Ascending aorta (tissue), 2 donors: ENCODE measurements at regions of chr2 and their contacts with region 1.

Region 1: DNA sequence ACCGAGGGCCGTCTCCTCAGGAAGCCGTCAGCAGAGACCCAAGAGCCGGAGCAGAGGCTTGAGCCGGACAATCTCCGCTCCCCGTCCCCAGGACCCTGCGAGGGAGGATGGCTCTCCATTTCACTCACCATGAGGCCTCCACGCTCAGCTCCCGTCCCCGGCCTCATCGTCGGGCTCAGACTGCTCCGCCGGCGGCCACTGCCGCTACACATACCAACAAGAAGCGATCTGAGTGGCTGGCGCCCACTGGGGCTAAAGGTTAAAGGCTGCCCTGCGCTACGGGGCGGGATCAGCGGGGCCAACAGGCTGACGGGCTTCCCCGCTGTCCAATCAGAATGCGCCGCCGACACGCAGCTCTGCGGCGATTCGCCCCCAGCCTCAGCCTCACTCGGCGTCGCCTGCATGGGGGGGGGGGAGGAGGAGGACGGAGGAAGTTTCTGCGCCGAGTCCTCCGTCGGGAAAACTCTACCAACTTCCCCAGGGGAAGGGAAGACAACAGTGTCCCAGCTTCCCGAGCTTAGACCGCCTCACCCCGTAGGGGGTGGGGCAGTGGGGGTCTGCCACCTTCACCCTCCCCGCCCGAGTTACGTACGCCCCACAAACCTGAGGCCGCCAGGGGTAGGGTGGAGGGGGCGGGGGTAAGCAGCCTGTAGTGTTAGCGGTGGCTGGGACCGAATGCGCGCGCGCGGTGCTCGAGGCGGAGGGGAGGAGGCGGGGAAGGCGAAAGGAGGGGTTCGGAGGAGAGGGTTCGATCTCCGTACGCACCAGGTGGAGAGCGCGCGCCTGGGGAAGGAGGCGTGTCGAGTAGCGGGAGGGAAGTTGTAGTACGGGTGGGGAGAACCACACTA is at the start of gene PRPF40A:
- DNase-seq: peak; percentile 95 to 99
- H3K4me3 ChIP-seq: peak within 1 kb of the TSS; percentile 83 to 96
- H3K27ac ChIP-seq: peak within 1 kb of the TSS; percentile 93 to 98
- H3K4me1 ChIP-seq: peaks cover 0 to 32% of the 10 kb centered on the region in 2 donors
- H3K27me3 ChIP-seq: no peaks in the 10 kb centered on the region
- CTCF ChIP-seq: no peak
- total RNA-seq, gene PRPF40A: 28.9 TPM

Region 2: GRCh38 chr2:152175458-152176325 is 541.8 kb before region 1 on chr2 and contains the start of gene STAM2:
- intact Hi-C with region 1: loop called (anchors 1 kb)
- DNase-seq: peak; percentile 64 to 96
- H3K4me3 ChIP-seq: peak within 1 kb of the TSS; percentile 75 to 99
- H3K27ac ChIP-seq: peak within 1 kb of the TSS; percentile 92 to 99
- H3K4me1 ChIP-seq: peaks cover 3 to 15% of the 10 kb centered on the region in 2 donors
- H3K27me3 ChIP-seq: no peaks in the 10 kb centered on the region
- CTCF ChIP-seq: peak; percentile 93 to 98 (median 94)
- total RNA-seq, gene STAM2: 4.0 TPM

Region 3: DNA sequence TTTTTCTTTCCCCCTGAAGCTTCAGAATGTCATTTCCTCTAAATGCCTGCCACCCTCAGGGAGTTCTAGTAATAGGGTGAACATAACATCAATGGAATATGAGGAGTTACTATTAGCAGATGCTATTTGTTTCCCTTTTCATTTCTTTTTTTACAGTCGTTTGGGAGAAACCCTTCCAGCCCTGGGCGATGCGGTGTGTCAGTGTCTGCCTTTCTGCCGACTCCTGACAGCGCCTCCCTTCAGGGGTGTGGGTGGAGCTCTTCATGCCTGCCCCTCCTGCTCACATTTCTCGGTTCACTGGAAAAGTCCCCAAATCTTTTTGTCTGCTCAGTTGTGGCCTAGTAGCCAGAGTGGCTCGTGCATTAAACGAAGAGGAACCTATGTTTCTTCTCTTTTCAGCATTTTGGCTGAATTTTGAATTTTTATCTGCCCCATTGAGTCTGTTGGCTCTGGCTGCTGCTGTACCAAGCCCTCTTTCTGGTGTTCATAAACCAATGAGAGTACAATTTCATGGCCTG is 310.2 kb before region 1 on chr2:
- intact Hi-C with region 1: loop called (anchors 5 kb)
- DNase-seq: peak in 1 of 2 donors; percentile 76
- H3K4me3 ChIP-seq: peak overlapping the region; percentile 29 to 40
- H3K27ac ChIP-seq: peak overlapping the region; percentile 59 to 85
- H3K4me1 ChIP-seq: peaks cover 27 to 67% of the 10 kb centered on the region in 2 donors
- H3K27me3 ChIP-seq: no peaks in the 10 kb centered on the region
- CTCF ChIP-seq: no peak

Region 4: GRCh38 chr2:152648336-152648735 is 69.1 kb before region 1 on chr2:
- intact Hi-C with region 1: no loop called
- DNase-seq: no peak
- H3K4me3 ChIP-seq: no peak overlapping the region
- H3K27ac ChIP-seq: no peak overlapping the region
- H3K4me1 ChIP-seq: peaks cover 0 to 3% of the 10 kb centered on the region in 2 donors
- H3K27me3 ChIP-seq: no peaks in the 10 kb centered on the region
- CTCF ChIP-seq: peak in 1 of 3 experiments; percentile 18

Region 5: DNA sequence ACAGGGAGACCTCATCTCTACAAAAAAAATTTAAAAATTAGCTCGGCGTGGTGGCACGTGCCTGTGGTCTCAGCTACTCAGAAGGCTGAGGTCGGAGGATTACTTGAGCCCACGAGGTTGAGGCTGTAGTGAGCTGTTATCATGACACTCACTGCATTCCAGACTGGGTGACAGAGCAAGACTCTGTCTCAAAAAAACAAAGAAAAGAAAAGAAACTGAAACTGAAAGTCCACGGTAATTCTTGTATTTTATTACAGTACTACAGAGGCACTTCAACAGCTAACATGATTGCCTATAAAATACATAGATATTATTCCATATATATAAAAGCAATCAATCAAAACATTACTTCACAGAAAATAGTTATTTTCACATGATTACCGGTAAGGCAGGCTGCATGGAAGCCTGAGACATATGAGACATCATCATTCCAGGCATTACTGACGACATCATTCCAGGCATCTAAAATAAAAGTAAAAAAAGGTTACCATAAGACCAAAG is 23.2 kb before region 1 on chr2:
- intact Hi-C with region 1: loop called (anchors 1 kb)
- DNase-seq: no peak
- H3K4me3 ChIP-seq: peak overlapping the region in 1 of 2 donors; percentile 45
- H3K27ac ChIP-seq: no peak overlapping the region
- H3K4me1 ChIP-seq: no peaks in the 10 kb centered on the region
- H3K27me3 ChIP-seq: no peaks in the 10 kb centered on the region
- CTCF ChIP-seq: no peak